ENCODE measurements at regions of chr20 and their contacts with region 1.

Region 1: GRCh38 chr20:62500237-62500864 is 24.6 kb upstream of the GATA5 start:
- DNase-seq: peak; percentile 72 to 73
- H3K4me3 ChIP-seq: no peak overlapping the region
- H3K27ac ChIP-seq: no peak overlapping the region
- H3K4me1 ChIP-seq: no peaks in the 10 kb centered on the region
- H3K27me3 ChIP-seq: no peaks in the 10 kb centered on the region
- CTCF ChIP-seq: peak; percentile 52 to 93 (median 85)
- POLR2A ChIP-seq: no peak

Region 2: DNA sequence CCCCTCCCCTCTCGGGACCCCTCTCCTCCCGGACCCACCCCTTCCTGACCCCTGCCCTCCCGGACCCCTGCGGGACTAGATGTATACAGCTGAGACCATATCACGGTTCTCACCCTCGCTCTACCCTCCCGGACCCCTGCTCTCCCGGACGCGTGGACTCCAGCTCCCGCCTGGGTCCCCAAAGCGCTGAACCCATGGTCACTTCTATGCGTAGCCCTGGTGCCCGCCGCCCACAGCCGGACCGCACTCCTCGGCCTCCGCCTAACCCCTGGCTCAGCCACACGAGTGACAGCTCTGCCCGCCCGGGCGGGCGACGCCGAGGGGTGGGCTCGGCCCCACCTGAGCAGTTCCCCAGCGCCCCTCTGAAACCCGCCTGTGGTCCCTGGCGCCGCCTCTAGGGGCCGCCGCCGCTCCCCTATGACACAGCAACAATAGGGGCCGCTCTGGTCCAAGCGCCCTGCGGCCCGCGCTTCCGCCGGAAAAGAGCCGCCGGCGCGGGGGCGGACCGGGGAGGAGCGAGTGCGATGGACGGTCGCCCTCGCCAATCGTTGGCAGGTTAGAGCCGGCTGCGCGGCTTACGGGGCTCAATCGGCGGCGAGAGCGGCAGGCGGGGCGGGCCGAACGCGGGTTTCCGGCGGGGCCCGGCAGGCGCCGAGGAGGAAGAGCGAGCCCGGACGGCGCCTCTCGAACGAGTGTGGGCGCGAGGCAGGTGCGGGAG is 197.9 kb before region 1 on chr20 and contains the start of gene ADRM1:
- intact Hi-C with region 1: loop called (anchors 10 kb)
- DNase-seq: peak; percentile 94 to 96
- H3K4me3 ChIP-seq: peak within 1 kb of the TSS; percentile 34 to 74 (median 51)
- H3K27ac ChIP-seq: peak within 1 kb of the TSS; percentile 85 to 97 (median 96)
- H3K4me1 ChIP-seq: peaks cover 19 to 23% of the 10 kb centered on the region in 2 donors
- H3K27me3 ChIP-seq: no peaks in the 10 kb centered on the region
- CTCF ChIP-seq: peak; percentile 77 to 99 (median 93)
- POLR2A ChIP-seq: peak in 1 of 2 donors; percentile 77
- total RNA-seq, gene ADRM1: 89.9 to 140 (median 117) TPM

Region 3: GRCh38 chr20:62616728-62617621 is 116.6 kb after region 1 on chr20:
- intact Hi-C with region 1: loop called (anchors 5 kb)
- DNase-seq: peak; percentile 72 to 74
- H3K4me3 ChIP-seq: no peak overlapping the region
- H3K27ac ChIP-seq: peak overlapping the region; percentile 6 to 68 (median 49)
- H3K4me1 ChIP-seq: peaks cover 0 to 15% of the 10 kb centered on the region in 2 donors
- H3K27me3 ChIP-seq: no peaks in the 10 kb centered on the region
- CTCF ChIP-seq: peak; percentile 76 to 99 (median 90)
- POLR2A ChIP-seq: no peak

Region 4: GRCh38 chr20:62793912-62794724 is 293.8 kb after region 1 on chr20:
- intact Hi-C with region 1: loop called (anchors 5 kb)
- DNase-seq: peak; percentile 97 to 98
- H3K4me3 ChIP-seq: peak overlapping the region in 1 of 3 donors; percentile 50
- H3K27ac ChIP-seq: peak overlapping the region; percentile 76 to 94 (median 78)
- H3K4me1 ChIP-seq: peaks cover 16 to 25% of the 10 kb centered on the region in 2 donors
- H3K27me3 ChIP-seq: no peaks in the 10 kb centered on the region
- CTCF ChIP-seq: peak in 1 of 6 experiments; percentile 12
- POLR2A ChIP-seq: peak in 1 of 2 donors; percentile 89

Region 5: GRCh38 chr20:63216041-63216848 is 715.9 kb after region 1 on chr20 and contains the start of gene YTHDF1:
- intact Hi-C with region 1: no loop called
- DNase-seq: peak; percentile 99
- H3K4me3 ChIP-seq: peak within 1 kb of the TSS; percentile 37 to 71 (median 67)
- H3K27ac ChIP-seq: peak within 1 kb of the TSS; percentile 76 to 89 (median 83)
- H3K4me1 ChIP-seq: peaks cover 18 to 38% of the 10 kb centered on the region in 2 donors
- H3K27me3 ChIP-seq: no peaks in the 10 kb centered on the region
- CTCF ChIP-seq: peak in 1 of 6 experiments; percentile 18
- POLR2A ChIP-seq: peak; percentile 35 to 84
- total RNA-seq, gene YTHDF1: 41.3 to 54.2 (median 43.4) TPM

Measured in thyroid gland (tissue), 4 donors.